GM12878 (cell line): ENCODE measurements at regions of chr7 and their contacts with region 1.

Region 1: DNA sequence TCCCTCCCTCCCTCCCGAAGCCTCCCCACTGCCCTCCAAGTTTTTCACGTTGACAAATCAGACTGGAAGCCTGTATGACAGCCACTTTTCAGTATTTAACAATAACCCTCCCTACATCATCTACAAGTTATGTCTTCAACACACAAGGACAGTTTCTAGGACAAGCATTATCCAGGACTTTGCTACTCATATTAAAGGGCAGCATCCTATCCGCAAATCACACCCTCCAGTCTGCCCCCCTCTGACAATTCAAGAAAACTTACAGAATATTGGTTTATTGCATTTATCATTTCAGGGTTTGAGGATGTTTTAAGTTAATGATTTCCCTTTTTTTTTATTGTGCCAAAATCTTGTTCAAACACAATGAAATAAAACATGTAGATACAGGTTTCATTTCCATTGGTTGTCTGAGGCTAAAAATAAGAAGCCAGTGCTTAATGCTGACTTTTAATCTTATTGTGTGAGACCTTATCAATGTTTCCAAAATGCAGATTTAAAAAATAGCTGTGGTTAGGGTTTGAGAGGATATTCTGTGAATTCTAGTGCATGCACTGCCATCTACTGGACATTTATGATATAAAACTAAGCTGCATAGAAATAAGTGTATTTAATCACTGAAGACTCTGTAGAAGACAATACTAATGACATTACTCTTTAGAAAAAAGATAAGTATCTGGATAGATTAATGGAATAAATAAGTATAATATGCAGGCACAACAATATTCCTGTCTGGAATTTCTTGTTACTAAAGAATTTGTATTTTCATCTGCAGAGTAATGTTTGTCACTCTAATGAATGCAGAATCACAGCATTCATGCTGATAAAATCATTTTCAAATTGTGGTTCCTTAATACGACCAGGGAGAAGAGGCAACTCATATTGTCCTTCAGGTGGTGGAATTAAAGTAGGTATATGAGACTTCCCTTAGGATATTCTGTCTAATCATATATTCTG is 64.1 kb downstream of the CAV1 start:
- DNase-seq: no peak
- ATAC-seq: peak; percentile 80
- H3K4me3 ChIP-seq: no peak overlapping the region
- H3K27ac ChIP-seq: no peak overlapping the region
- H3K4me1 ChIP-seq: peaks cover 29% of the 10 kb centered on the region
- H3K27me3 ChIP-seq: peaks cover 0 to 2% of the 10 kb centered on the region in 2 experiments; a peak in 2 of 4 replicates
- CTCF ChIP-seq: peak; percentile 40 to 70 (median 51); a peak in 5 of 6 replicates
- EP300 ChIP-seq: no peak
- POLR2A ChIP-seq: no peak
- RAD21 ChIP-seq: peak; percentile 88

Region 2: GRCh38 chr7:115851291-115851690 is 737.6 kb before region 1 on chr7:
- CTCF ChIA-PET with region 1: no interaction called
- POLR2A ChIA-PET with region 1: no interaction called
- RAD21 ChIA-PET with region 1: no interaction called
- SMC1A ChIA-PET with region 1: no interaction called
- in situ Hi-C with region 1: no loop called
- intact Hi-C with region 1: no loop called
- DNase-seq: no peak
- ATAC-seq: peak; percentile 57
- H3K4me3 ChIP-seq: no peak overlapping the region
- H3K27ac ChIP-seq: no peak overlapping the region
- H3K4me1 ChIP-seq: no peaks in the 10 kb centered on the region
- H3K27me3 ChIP-seq: no peaks in the 10 kb centered on the region; a peak in 1 of 4 replicates
- CTCF ChIP-seq: peak; percentile 13 to 55 (median 20); a peak in 4 of 6 replicates
- EP300 ChIP-seq: no peak
- POLR2A ChIP-seq: no peak
- RAD21 ChIP-seq: peak; percentile 73

Region 3: DNA sequence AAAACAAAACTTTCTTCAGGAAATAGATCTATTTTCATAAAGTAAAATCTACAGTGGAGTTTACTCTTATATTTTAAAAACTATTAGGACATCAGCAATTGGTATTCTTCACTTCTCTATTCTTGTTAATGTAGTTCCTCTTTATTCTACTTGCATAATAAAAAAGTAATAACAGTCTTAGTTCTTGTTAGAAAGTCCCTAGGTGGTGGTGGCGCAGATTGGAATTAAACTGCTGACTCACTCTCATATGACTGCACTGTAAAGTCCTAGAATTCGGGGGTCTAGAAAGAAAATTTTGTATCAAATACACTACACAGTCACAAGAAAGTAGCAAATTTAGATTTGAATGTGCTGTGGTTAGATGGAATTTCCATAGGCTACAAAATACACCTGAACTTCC is 423.2 kb before region 1 on chr7:
- CTCF ChIA-PET with region 1: interaction called, 33 read pairs
- POLR2A ChIA-PET with region 1: no interaction called
- RAD21 ChIA-PET with region 1: no interaction called
- SMC1A ChIA-PET with region 1: interaction called, 7 read pairs
- in situ Hi-C with region 1: loop called (anchors 10 kb)
- intact Hi-C with region 1: no loop called
- DNase-seq: no peak
- ATAC-seq: peak; percentile 83
- H3K4me3 ChIP-seq: no peak overlapping the region
- H3K27ac ChIP-seq: peak overlapping the region; percentile 38
- H3K4me1 ChIP-seq: peaks cover 46% of the 10 kb centered on the region
- H3K27me3 ChIP-seq: no peaks in the 10 kb centered on the region
- CTCF ChIP-seq: no peak
- EP300 ChIP-seq: peak; percentile 34 to 71; a peak in 2 of 4 replicates
- POLR2A ChIP-seq: no peak
- RAD21 ChIP-seq: no peak

Region 4: GRCh38 chr7:116224492-116225098 is 364.3 kb before region 1 on chr7:
- CTCF ChIA-PET with region 1: interaction called, 11 read pairs
- POLR2A ChIA-PET with region 1: no interaction called
- RAD21 ChIA-PET with region 1: no interaction called
- SMC1A ChIA-PET with region 1: no interaction called
- in situ Hi-C with region 1: no loop called
- intact Hi-C with region 1: no loop called
- DNase-seq: no peak
- ATAC-seq: peak; percentile 86
- H3K4me3 ChIP-seq: peak overlapping the region; percentile 53; the same call in 1 of the 2 replicates
- H3K27ac ChIP-seq: peak overlapping the region; percentile 24; the same call in 1 of the 2 replicates
- H3K4me1 ChIP-seq: peaks cover 18% of the 10 kb centered on the region
- H3K27me3 ChIP-seq: no peaks in the 10 kb centered on the region
- CTCF ChIP-seq: no peak
- EP300 ChIP-seq: peak in 1 of 2 experiments; percentile 15; a peak in 1 of 4 replicates
- POLR2A ChIP-seq: no peak
- RAD21 ChIP-seq: no peak

Region 5: GRCh38 chr7:116258734-116259133 is 330.2 kb before region 1 on chr7:
- CTCF ChIA-PET with region 1: interaction called, 169 read pairs
- POLR2A ChIA-PET with region 1: interaction called, 3 read pairs
- RAD21 ChIA-PET with region 1: interaction called, 50 read pairs
- SMC1A ChIA-PET with region 1: interaction called, 156 read pairs
- in situ Hi-C with region 1: loop called (anchors 5 kb)
- intact Hi-C with region 1: loop called (anchors 1 kb)
- DNase-seq: peak; percentile 23
- ATAC-seq: peak; percentile 59
- H3K4me3 ChIP-seq: no peak overlapping the region
- H3K27ac ChIP-seq: no peak overlapping the region
- H3K4me1 ChIP-seq: no peaks in the 10 kb centered on the region
- H3K27me3 ChIP-seq: no peaks in the 10 kb centered on the region
- CTCF ChIP-seq: peak; percentile 53 to 76 (median 65); a peak in 5 of 6 replicates
- EP300 ChIP-seq: no peak
- POLR2A ChIP-seq: no peak
- RAD21 ChIP-seq: peak; percentile 92

Region 6: GRCh38 chr7:116607299-116607698 is 18.4 kb after region 1 on chr7:
- CTCF ChIA-PET with region 1: interaction called, 24 read pairs
- POLR2A ChIA-PET with region 1: no interaction called
- RAD21 ChIA-PET with region 1: interaction called, 4 read pairs
- SMC1A ChIA-PET with region 1: interaction called, 7 read pairs
- in situ Hi-C with region 1: no loop called
- intact Hi-C with region 1: no loop called
- DNase-seq: no peak
- ATAC-seq: no peak
- H3K4me3 ChIP-seq: no peak overlapping the region
- H3K27ac ChIP-seq: no peak overlapping the region
- H3K4me1 ChIP-seq: no peaks in the 10 kb centered on the region
- H3K27me3 ChIP-seq: peaks cover 0 to 1% of the 10 kb centered on the region in 2 experiments; a peak in 2 of 4 replicates
- CTCF ChIP-seq: no peak
- EP300 ChIP-seq: no peak
- POLR2A ChIP-seq: no peak
- RAD21 ChIP-seq: no peak

Region 7: DNA sequence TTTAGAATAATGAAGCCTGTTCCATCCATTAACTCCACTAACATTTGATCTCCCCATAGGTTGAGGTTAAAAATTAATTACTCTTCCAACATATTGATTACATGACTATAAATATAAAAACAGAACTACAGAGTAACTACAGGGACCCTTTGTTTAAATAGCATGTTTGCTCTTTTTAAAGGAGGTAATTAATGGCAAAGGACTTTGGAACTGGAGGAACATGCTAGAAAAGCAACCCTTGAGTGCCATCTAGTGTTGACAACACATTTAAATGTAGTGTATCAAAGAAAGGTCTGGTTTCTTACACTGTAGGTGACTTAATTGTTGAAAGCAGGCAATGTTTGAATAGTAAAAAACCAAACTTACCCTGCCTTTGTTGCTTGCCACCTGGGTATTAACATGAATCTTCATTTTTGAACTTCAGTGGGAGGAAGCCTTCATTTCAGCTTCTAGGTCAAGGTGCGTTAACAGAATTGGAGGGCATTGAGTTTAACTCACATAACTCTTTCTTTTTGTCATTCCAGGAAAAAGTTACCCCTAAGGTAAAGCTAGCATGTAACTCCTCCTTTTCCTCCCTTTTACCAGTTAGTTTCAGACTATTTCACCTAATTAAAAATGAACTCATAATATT is 220.8 kb after region 1 on chr7:
- CTCF ChIA-PET with region 1: interaction called, 118 read pairs
- POLR2A ChIA-PET with region 1: interaction called, 3 read pairs
- RAD21 ChIA-PET with region 1: interaction called, 3 read pairs
- SMC1A ChIA-PET with region 1: interaction called, 11 read pairs
- in situ Hi-C with region 1: no loop called
- intact Hi-C with region 1: loop called (anchors 1 kb)
- DNase-seq: no peak
- ATAC-seq: peak; percentile 92
- H3K4me3 ChIP-seq: no peak overlapping the region
- H3K27ac ChIP-seq: no peak overlapping the region
- H3K4me1 ChIP-seq: no peaks in the 10 kb centered on the region
- H3K27me3 ChIP-seq: no peaks in the 10 kb centered on the region; a peak in 1 of 4 replicates
- CTCF ChIP-seq: peak; percentile 49 to 75 (median 56); a peak in 5 of 6 replicates
- EP300 ChIP-seq: no peak
- POLR2A ChIP-seq: no peak
- RAD21 ChIP-seq: peak; percentile 82

Region 8: DNA sequence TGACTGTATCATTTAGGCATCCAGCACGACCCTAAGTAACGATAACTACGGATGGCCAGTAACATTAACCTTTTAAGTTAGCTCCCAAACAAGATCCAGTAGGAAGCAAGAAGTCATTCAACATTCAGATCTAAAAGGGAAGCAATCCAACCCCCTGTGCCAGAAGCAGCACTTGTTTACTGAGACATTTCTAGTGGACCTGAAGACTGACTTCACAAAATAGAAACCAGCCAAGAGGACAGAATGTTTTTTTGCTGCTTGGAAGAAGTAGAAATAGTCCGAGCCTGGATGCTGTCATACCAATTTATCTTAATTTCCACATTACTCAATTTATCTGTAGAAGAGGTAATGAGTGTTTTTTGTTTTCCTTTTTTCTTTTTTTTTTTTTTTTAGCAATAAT is 1372.3 kb after region 1 on chr7:
- CTCF ChIA-PET with region 1: no interaction called
- POLR2A ChIA-PET with region 1: no interaction called
- RAD21 ChIA-PET with region 1: no interaction called
- SMC1A ChIA-PET with region 1: no interaction called
- in situ Hi-C with region 1: no loop called
- intact Hi-C with region 1: no loop called
- DNase-seq: no peak
- ATAC-seq: no peak
- H3K4me3 ChIP-seq: no peak overlapping the region
- H3K27ac ChIP-seq: no peak overlapping the region
- H3K4me1 ChIP-seq: no peaks in the 10 kb centered on the region
- H3K27me3 ChIP-seq: no peaks in the 10 kb centered on the region
- CTCF ChIP-seq: no peak
- EP300 ChIP-seq: no peak
- POLR2A ChIP-seq: no peak
- RAD21 ChIP-seq: no peak